ENCODE measurements at regions of chr1 and their contacts with region 1.

Region 1: GRCh38 chr1:147850759-147851508 is 51.7 kb upstream of the GJA8 start:
- DNase-seq: peak; percentile 29 to 65 (median 38)
- ATAC-seq: peak; percentile 86
- H3K4me3 ChIP-seq: no peak overlapping the region
- H3K27ac ChIP-seq: peak overlapping the region; percentile 56; the same call in 1 of the 3 replicates
- H3K4me1 ChIP-seq: peaks cover 0 to 14% of the 10 kb centered on the region in 2 experiments; a peak in 3 of 5 replicates
- H3K27me3 ChIP-seq: no peaks in the 10 kb centered on the region
- CTCF ChIP-seq: no peak
- EP300 ChIP-seq: peak; percentile 25; the same call in 1 of the 2 replicates
- POLR2A ChIP-seq: no peak
- RAD21 ChIP-seq: no peak

Region 2: DNA sequence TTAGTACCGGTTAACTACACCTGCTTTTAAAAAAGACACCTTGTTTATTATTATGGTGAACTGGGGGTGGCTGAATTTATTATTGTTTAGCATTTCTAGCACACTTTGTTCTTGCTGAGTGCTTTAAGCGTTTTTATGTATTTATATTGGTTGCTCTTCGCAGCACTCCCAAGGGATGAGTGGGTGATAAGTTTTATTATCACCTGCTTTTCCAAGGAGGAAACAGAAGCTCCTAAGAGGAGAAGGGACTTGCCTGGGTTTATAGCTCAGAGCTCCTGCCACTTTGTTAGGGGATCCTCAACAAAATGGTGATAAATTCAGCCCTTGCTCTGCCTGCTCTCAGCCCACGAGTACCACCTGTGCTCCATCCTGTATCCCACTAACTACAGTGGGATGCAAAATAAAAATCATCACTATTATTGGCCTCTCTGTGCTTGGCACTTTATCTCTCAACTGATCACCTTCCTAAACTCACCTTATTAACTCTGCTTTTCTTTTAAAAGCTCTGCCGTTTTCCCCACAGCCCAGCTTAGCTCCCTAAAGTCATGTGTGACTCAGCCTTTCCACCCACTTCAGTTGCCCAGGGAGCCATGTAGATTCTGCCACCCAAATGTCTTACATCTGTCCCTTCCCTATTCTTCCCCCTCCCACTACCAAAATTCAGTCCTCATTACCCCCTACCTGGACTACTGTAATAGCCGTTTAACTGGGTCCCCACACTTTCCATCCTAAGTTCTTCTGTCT is 265.1 kb before region 1 on chr1:
- CTCF ChIA-PET with region 1: no interaction called
- POLR2A ChIA-PET with region 1: no interaction called
- in situ Hi-C with region 1: no loop called
- intact Hi-C with region 1: no loop called
- DNase-seq: no peak
- ATAC-seq: no peak
- H3K4me3 ChIP-seq: no peak overlapping the region
- H3K27ac ChIP-seq: no peak overlapping the region
- H3K4me1 ChIP-seq: peaks cover 0 to 2% of the 10 kb centered on the region in 2 experiments; a peak in 2 of 5 replicates
- H3K27me3 ChIP-seq: peaks cover 2 to 14% of the 10 kb centered on the region in 2 experiments; a peak in 4 of 5 replicates
- CTCF ChIP-seq: no peak
- EP300 ChIP-seq: no peak
- POLR2A ChIP-seq: no peak
- RAD21 ChIP-seq: no peak

Region 3: DNA sequence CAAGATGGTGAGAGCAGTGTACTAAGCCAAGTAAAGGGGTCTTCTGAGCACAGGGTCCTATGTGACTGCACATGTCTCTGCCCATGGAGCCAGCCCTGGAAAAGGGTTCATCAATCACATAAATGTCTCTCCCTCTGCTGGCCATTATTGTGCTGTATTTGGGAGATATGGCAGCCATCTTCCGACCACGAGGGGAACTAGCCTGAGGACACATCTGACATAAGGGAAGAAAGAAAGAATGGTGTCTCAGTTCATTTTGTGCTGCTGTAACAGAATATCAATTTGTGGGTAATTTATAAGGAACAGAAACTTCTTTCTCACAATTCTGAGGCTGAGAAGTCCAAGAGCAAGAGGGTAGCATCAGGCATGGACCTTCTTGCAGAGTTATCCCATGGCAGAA is 35.4 kb before region 1 on chr1:
- CTCF ChIA-PET with region 1: no interaction called
- POLR2A ChIA-PET with region 1: no interaction called
- in situ Hi-C with region 1: no loop called
- intact Hi-C with region 1: loop called (anchors 5 kb)
- DNase-seq: peak in 2 of 4 experiments; percentile 13 to 25
- ATAC-seq: peak; percentile 63; the same call in 2 of the 3 replicates
- H3K4me3 ChIP-seq: no peak overlapping the region
- H3K27ac ChIP-seq: no peak overlapping the region
- H3K4me1 ChIP-seq: no peaks in the 10 kb centered on the region
- H3K27me3 ChIP-seq: peaks cover 0 to 14% of the 10 kb centered on the region in 2 experiments; a peak in 2 of 5 replicates
- CTCF ChIP-seq: peak; percentile 25 to 56 (median 36); a peak in 4 of 6 replicates
- EP300 ChIP-seq: no peak
- POLR2A ChIP-seq: no peak
- RAD21 ChIP-seq: 0 out of 4 replicates have a peak, but pooled peaks of 1 of the 2 experiments have one; percentile 15